Activated T-helper 1 cell treated with anti-CD3 and anti-CD28 coated beads, Interleukin-12 subunit alpha, Interleukin-12 subunit beta, Interleukin-2, Interleukin-4 antibody, amounts not matched to agents 30 ng/mL and 10 ng/mL and 1 ng/mL, durations not matched to agents 14 hours and 24 hours and 36 hours (primary cell): ENCODE measurements at regions of chrX and their contacts with region 1.

Region 1: GRCh38 chrX:20515841-20516461 is 249.2 kb upstream of the RPS6KA3 start:
- DNase-seq: peak; percentile 14
- H3K4me3 Mint-ChIP-seq: peak overlapping the region; percentile 45
- H3K27ac Mint-ChIP-seq: peak overlapping the region; percentile 92
- H3K4me1 Mint-ChIP-seq: peaks cover 58% of the 10 kb centered on the region
- H3K27me3 Mint-ChIP-seq: peaks cover 6% of the 10 kb centered on the region

Region 2: DNA sequence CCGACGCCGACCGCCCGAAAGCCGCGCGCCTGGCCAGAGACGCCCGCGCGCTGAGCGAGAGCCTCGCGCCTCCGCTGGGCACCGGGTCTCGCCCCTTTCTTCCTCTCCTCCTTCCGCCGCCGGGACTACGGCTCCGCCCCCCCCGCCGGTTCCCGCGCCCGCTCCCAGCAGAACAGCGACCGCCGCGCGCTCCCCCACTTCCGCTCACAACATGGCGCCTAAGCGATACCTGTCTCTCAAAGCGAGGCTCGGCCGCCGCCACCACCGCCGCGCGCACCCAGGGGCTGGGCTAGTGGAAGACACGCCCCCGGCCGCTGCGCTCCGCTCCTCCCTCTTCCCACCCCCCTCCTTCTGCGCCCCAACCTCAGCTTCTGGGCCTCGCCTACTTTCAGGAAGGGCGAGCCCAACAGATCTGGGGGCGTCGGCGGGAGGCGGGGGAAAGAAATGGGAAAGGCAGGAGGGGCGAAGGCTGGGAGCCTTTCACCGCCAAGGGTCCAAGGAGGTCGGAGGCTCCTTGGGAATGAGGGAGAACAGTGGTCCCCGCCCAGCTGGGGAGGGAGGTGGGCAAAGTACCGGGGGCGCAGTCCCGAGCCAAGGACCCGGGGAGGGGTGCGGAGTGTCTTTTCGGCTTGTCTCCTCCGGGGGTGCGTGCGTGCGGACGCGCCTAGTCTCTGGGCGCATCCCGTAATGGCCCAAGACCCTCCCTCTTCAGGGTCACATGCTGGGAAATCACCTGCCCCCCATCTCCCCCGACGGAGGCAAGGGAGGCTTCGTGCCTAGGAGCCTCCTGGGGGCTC is 248.9 kb before region 1 on chrX and contains the start of gene RPS6KA3:
- intact Hi-C with region 1: loop called (anchors 1 kb)
- DNase-seq: peak; percentile 85
- H3K4me3 Mint-ChIP-seq: peak within 1 kb of the TSS; percentile 98
- H3K27ac Mint-ChIP-seq: peak within 1 kb of the TSS; percentile 97
- H3K4me1 Mint-ChIP-seq: peaks cover 20% of the 10 kb centered on the region
- H3K27me3 Mint-ChIP-seq: peaks cover 8% of the 10 kb centered on the region
- total RNA-seq, gene RPS6KA3: 58.8 and 60.6 TPM in 2 replicates

Region 3: DNA sequence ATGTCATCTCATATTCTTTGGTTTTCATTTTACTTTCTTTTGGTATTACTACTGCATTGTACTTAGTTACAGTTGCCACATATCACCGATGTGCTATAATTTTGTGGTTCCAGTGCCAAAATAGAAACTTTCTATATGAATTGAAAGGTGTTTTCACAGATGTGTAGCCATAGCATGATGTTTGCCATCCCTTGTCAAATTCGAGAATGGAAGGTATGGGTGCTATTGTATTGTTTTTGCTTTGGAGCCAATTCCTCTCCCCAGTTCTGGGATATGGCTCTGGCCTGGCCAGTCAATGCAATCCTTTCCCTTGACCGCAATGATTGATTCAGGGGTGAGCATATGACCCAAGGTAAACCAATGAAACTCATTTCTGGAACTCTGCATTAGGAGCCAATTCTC is 163.0 kb before region 1 on chrX:
- intact Hi-C with region 1: loop called (anchors 10 kb)
- DNase-seq: no peak
- H3K4me3 Mint-ChIP-seq: no peak overlapping the region
- H3K27ac Mint-ChIP-seq: no peak overlapping the region
- H3K4me1 Mint-ChIP-seq: peaks cover 5% of the 10 kb centered on the region
- H3K27me3 Mint-ChIP-seq: peaks cover 3% of the 10 kb centered on the region

Region 4: DNA sequence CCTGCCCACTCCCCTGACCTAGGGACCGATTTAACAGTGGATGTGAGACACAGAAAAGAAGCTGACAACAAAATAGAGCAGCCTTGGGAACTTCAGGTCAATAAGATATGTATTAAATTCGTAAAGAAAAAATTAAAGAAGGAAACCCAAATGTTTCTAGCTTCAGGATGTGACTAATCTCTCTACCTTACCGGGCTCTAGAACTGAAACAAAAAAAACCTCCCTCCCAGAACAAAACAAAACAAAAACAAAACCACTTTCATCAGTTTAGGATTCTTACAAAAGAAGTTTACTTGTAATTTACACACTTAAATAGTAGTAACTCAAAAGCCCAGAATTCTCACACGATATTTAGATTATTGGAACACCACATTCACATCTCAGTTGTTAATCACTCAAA is 63.5 kb before region 1 on chrX:
- intact Hi-C with region 1: loop called (anchors 2 kb)
- DNase-seq: no peak
- H3K4me3 Mint-ChIP-seq: peak overlapping the region; percentile 1
- H3K27ac Mint-ChIP-seq: peak overlapping the region; percentile 84
- H3K4me1 Mint-ChIP-seq: peaks cover 41% of the 10 kb centered on the region
- H3K27me3 Mint-ChIP-seq: peaks cover 3% of the 10 kb centered on the region

Region 5: GRCh38 chrX:20471483-20471882 is 44.5 kb before region 1 on chrX:
- intact Hi-C with region 1: no loop called
- DNase-seq: no peak
- H3K4me3 Mint-ChIP-seq: no peak overlapping the region
- H3K27ac Mint-ChIP-seq: no peak overlapping the region
- H3K4me1 Mint-ChIP-seq: no peaks in the 10 kb centered on the region
- H3K27me3 Mint-ChIP-seq: peaks cover 5% of the 10 kb centered on the region

Region 6: DNA sequence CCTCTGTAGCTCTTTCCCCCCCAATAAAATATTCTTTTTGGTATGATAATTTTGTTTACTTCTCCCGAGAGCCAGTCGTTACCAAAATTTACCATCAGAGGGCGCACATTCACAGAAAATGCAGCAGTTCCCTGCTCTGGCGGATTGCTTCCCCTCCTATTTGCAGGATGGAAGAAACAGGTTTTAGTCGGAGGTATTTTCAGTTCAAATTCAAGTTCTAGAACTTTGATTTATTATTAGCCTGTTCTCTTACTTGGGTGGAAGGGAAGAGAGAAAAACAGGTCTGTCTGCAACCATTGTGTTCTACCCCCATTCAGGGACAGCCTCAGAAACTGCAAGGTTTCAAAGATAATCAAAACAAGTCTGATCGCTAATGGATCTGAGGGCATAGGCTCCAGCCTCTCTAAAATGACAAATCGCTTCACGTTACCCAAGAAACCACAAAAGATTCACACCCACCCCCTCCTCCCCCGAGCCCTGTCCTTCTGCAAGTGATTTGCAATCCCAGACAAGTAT is 14.5 kb after region 1 on chrX:
- intact Hi-C with region 1: loop called (anchors 1 kb)
- DNase-seq: peak; percentile 19
- H3K4me3 Mint-ChIP-seq: no peak overlapping the region
- H3K27ac Mint-ChIP-seq: no peak overlapping the region
- H3K4me1 Mint-ChIP-seq: peaks cover 11% of the 10 kb centered on the region
- H3K27me3 Mint-ChIP-seq: peaks cover 41% of the 10 kb centered on the region

Region 7: DNA sequence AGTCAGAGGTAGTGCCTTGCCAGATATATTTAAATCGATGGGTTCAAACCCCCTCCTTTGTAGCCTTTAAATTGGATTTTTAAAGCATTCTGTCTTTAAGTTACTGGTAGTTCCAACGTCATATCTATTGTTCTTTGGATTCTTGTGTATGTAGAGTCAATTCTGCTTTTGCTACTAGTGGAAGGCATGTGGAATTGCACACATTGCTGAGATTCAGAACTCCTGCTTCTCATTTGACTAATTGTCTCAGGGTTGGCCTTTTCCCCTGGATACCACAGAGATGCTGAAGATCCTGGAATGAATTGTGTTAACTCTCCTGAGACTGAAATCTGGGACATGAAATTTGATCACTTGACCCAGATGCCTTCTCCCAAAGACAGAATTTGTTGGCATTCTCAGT is 79.0 kb after region 1 on chrX:
- intact Hi-C with region 1: loop called (anchors 1 kb)
- DNase-seq: no peak
- H3K4me3 Mint-ChIP-seq: no peak overlapping the region
- H3K27ac Mint-ChIP-seq: no peak overlapping the region
- H3K4me1 Mint-ChIP-seq: peaks cover 25% of the 10 kb centered on the region
- H3K27me3 Mint-ChIP-seq: peaks cover 2% of the 10 kb centered on the region

Region 8: GRCh38 chrX:20718592-20719389 is 202.8 kb after region 1 on chrX:
- intact Hi-C with region 1: no loop called
- DNase-seq: no peak
- H3K4me3 Mint-ChIP-seq: no peak overlapping the region
- H3K27ac Mint-ChIP-seq: no peak overlapping the region
- H3K4me1 Mint-ChIP-seq: no peaks in the 10 kb centered on the region
- H3K27me3 Mint-ChIP-seq: no peaks in the 10 kb centered on the region

Region 9: GRCh38 chrX:22063284-22063683 is 1547.3 kb after region 1 on chrX:
- intact Hi-C with region 1: loop called (anchors 10 kb)
- DNase-seq: peak; percentile 0
- H3K4me3 Mint-ChIP-seq: no peak overlapping the region
- H3K27ac Mint-ChIP-seq: peak overlapping the region; percentile 59
- H3K4me1 Mint-ChIP-seq: peaks cover 47% of the 10 kb centered on the region
- H3K27me3 Mint-ChIP-seq: no peaks in the 10 kb centered on the region